ENCODE measurements at regions of chr2 and their contacts with region 1.

Region 1: GRCh38 chr2:38535744-38536506 is 66.8 kb downstream of the HNRNPLL start:
- DNase-seq: peak; percentile 55 to 90 (median 76)
- ATAC-seq: peak; percentile 96
- H3K4me3 ChIP-seq: peak overlapping the region; percentile 44
- H3K4me3 Mint-ChIP-seq: no peak overlapping the region
- H3K27ac ChIP-seq: no peak overlapping the region
- H3K27ac Mint-ChIP-seq: no peak overlapping the region
- H3K4me1 ChIP-seq: peaks cover 14% of the 10 kb centered on the region
- H3K4me1 Mint-ChIP-seq: no peaks in the 10 kb centered on the region
- H3K27me3 ChIP-seq: no peaks in the 10 kb centered on the region
- H3K27me3 Mint-ChIP-seq: peaks cover 7% of the 10 kb centered on the region
- CTCF ChIP-seq: peak; percentile 93

Region 2: DNA sequence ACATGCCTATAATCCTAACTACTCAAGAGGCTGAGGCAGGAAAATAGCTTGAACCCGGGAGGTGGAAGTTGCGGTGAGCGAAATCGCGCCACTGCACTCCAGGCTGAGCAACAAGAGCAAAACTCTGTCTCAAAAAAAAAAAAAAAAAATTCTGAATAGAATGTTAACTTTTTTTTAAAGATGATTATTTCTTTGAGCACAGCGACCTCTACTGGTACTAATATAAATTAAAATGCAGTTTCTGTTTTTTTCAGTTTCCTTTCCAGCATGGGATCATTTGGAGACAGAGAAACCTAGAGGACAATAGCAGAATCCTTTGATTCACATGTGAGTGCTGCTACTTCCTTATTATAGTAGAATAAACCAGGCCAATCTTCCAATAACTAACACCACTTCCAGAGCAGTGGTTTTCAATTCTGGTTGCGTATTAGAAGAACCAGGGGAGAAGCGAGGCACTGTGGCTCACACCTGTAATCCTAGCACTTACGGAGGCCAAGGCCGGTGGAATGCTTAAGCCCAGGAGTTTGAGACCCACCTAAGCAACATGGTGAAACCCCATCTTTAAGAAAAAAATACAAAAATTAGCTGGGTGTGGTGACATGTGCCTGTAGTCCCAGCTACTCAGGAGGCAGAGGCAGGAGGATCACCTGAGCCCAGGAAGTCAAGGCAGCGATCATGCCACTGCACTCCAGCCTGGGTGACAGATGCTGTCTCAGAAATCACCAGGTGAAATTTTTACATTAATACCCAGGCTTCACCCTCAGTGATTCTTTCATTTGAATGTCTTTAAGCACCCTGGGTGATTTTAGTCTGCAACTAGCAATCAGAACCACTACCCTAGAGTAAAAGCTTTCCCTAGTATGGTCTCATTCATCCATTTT is 205.2 kb after region 1 on chr2:
- CTCF ChIA-PET with region 1: no interaction called
- POLR2A ChIA-PET with region 1: no interaction called
- intact Hi-C with region 1: loop called (anchors 1 kb)
- DNase-seq: peak in 6 of 14 experiments; percentile 25 to 76 (median 51)
- ATAC-seq: peak; percentile 33
- H3K4me3 ChIP-seq: no peak overlapping the region
- H3K4me3 Mint-ChIP-seq: peak overlapping the region; percentile 1
- H3K27ac ChIP-seq: no peak overlapping the region
- H3K27ac Mint-ChIP-seq: peak overlapping the region; percentile 43
- H3K4me1 ChIP-seq: peaks cover 17% of the 10 kb centered on the region
- H3K4me1 Mint-ChIP-seq: peaks cover 54% of the 10 kb centered on the region
- H3K27me3 ChIP-seq: no peaks in the 10 kb centered on the region
- H3K27me3 Mint-ChIP-seq: no peaks in the 10 kb centered on the region
- CTCF ChIP-seq: peak; percentile 78

Region 3: GRCh38 chr2:38835015-38835601 is 299.2 kb after region 1 on chr2:
- CTCF ChIA-PET with region 1: interaction called, 3 read pairs
- POLR2A ChIA-PET with region 1: no interaction called
- intact Hi-C with region 1: loop called in 1 of 2 experiments (anchors 5 kb)
- DNase-seq: peak in 3 of 14 experiments; percentile 26 to 40 (median 35)
- ATAC-seq: no peak
- H3K4me3 ChIP-seq: no peak overlapping the region
- H3K4me3 Mint-ChIP-seq: no peak overlapping the region
- H3K27ac ChIP-seq: no peak overlapping the region
- H3K27ac Mint-ChIP-seq: no peak overlapping the region
- H3K4me1 ChIP-seq: no peaks in the 10 kb centered on the region
- H3K4me1 Mint-ChIP-seq: no peaks in the 10 kb centered on the region
- H3K27me3 ChIP-seq: no peaks in the 10 kb centered on the region
- H3K27me3 Mint-ChIP-seq: no peaks in the 10 kb centered on the region
- CTCF ChIP-seq: peak; percentile 46